Activated naive CD4-positive, alpha-beta T cell treated with anti-CD3 and anti-CD28 coated beads, Interleukin-2, amount 10 ng/mL, durations not matched to agents 7 days and 5 days (primary cell): ENCODE measurements at regions of chr2 and their contacts with region 1.

Region 1: DNA sequence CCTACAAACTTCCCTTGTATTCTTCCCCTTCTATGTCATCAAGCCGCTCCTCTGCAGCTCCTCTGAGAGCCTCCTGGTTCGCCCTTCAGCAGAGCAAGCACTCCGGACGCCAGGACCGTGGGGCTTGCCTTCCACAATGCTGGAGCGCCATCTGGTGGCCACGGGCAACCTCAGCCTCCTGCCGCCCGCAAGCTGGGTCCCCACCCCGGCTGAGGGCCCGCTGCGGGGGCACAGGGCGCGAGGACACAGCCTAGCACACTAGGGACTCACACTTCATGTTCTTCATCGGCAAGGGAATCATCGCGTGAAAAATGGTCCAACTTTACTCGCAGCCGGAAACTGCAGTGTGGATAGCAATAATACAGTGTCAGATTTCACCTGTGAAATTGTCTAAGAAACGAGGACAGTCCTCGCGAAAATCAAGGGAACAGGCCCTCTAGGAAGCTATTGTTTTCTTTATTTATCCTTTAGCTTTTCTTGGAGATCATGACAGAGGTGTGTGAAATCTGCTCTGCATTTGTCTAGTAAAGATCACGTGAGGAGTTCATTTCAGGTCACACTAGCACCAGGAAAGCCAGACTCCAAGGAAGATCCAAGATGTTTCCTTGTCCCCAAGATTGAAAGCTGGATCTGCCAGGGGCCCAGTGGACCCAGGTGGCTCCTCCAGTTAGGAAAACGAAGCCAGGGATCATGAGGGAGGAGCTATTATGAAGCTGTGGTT is 5.8 kb downstream of the PRLH start:
- DNase-seq: peak; percentile 90
- H3K4me3 Mint-ChIP-seq: no peak overlapping the region
- H3K27ac Mint-ChIP-seq: no peak overlapping the region
- H3K4me1 Mint-ChIP-seq: no peaks in the 10 kb centered on the region
- H3K27me3 Mint-ChIP-seq: peaks cover 26% of the 10 kb centered on the region

Region 2: GRCh38 chr2:237411683-237412423 is 160.3 kb before region 1 on chr2:
- CTCF ChIA-PET with region 1: interaction called, 11 read pairs
- DNase-seq: no peak
- H3K4me3 Mint-ChIP-seq: no peak overlapping the region
- H3K27ac Mint-ChIP-seq: no peak overlapping the region
- H3K4me1 Mint-ChIP-seq: no peaks in the 10 kb centered on the region
- H3K27me3 Mint-ChIP-seq: peaks cover 24% of the 10 kb centered on the region

Region 3: DNA sequence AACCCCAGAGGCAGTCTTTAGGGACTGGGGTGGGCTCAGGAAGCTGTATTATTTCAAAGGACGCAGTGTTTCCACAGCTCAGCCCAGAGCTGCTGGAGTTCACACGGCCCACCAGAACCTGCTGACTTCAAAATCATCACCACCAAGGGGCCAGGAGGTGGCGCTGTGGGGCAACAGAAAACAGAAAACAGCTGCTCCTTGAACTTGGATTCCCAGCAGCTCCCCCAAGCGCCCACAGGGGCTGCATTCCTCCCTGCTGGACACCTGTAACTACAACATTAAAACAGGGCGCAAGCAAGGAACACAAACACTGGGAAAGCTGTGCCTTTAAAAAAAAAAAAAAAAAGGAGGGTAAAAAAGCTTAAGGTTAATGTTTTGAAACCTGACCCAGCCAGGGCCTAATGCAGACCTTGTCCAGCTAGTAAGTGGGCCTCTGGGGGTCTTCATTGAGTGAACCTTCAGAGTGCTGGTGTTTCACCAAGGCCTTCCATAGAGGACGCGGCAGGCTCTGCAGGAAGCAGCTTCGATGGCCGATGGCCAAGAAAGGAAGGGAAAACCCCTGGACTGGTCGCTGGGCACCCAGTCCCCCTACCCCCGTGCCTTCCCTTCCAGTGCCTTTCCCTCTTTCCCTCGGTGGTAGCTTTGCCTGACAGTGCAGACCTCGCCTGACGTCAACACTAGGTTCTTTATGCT is 59.3 kb before region 1 on chr2:
- CTCF ChIA-PET with region 1: interaction called, 215 read pairs
- DNase-seq: peak; percentile 87
- H3K4me3 Mint-ChIP-seq: no peak overlapping the region
- H3K27ac Mint-ChIP-seq: no peak overlapping the region
- H3K4me1 Mint-ChIP-seq: no peaks in the 10 kb centered on the region
- H3K27me3 Mint-ChIP-seq: peaks cover 14% of the 10 kb centered on the region

Region 4: DNA sequence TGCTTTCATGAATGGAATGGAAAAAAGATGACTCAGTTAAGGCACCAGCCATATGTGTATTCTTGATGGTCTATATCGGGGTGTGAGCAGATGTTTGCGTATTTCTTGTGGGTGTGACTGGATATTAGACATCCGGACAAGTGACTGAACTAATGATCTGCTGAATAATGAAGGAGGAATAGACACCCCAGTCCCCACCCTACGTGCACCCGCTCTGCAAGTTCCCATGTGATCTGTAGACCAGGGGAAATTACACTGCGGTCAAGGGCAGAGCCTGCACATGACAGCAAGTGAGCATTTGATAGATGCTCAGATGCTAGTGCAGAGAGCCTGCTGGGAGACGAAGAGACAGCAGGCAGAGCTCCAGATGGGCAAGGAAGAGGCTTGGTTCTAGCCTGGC is 18.2 kb before region 1 on chr2:
- CTCF ChIA-PET with region 1: interaction called, 13 read pairs
- DNase-seq: no peak
- H3K4me3 Mint-ChIP-seq: no peak overlapping the region
- H3K27ac Mint-ChIP-seq: no peak overlapping the region
- H3K4me1 Mint-ChIP-seq: peaks cover 13% of the 10 kb centered on the region
- H3K27me3 Mint-ChIP-seq: peaks cover 33% of the 10 kb centered on the region

Region 5: DNA sequence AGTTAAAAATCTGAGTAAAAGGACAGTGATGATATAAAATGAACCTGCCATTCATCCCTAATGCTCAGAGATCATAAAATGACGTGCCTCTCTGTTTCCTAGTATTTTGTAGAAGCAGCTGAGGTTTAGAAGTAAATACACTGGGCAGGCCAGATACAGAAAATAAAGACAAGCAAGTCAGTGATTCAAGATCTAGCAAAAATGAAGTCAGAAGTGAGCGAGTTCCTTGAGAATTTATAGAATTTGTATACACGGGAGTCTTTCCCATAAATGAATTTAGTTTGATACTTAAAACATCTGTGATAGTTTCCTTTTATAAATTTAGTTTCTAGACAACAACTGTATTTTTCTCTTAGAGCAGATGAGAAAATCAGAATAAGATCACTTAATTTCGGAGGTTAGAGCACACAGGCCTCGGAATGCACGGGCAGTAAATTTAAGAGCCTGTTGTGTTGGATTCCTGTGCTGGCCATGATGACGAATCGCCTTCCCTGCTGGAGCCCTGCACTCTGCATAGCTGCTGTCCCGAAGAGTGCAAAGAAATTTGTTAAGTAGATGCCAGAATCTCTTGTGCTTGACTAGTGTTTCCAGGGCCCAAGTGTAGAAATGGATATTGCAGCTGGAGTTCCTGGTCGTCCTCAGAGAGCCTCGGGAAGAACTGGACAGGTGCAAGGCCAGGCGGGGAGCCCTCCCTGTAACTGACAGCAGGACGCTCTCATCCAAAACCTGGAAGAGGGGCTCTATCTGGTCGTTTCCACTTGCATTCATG is 142.7 kb after region 1 on chr2:
- CTCF ChIA-PET with region 1: no interaction called
- DNase-seq: no peak
- H3K4me3 Mint-ChIP-seq: no peak overlapping the region
- H3K27ac Mint-ChIP-seq: no peak overlapping the region
- H3K4me1 Mint-ChIP-seq: peaks cover 33% of the 10 kb centered on the region
- H3K27me3 Mint-ChIP-seq: no peaks in the 10 kb centered on the region